ENCODE measurements at regions of chr6 and their contacts with region 1.

Region 1: GRCh38 chr6:7324520-7324919 is 11.5 kb upstream of the SSR1 start:
- DNase-seq: no peak
- ATAC-seq: peak; percentile 55 to 72
- H3K4me3 ChIP-seq: no peak overlapping the region
- H3K27ac ChIP-seq: no peak overlapping the region
- H3K4me1 ChIP-seq: no peaks in the 10 kb centered on the region
- H3K27me3 ChIP-seq: no peaks in the 10 kb centered on the region

Region 2: DNA sequence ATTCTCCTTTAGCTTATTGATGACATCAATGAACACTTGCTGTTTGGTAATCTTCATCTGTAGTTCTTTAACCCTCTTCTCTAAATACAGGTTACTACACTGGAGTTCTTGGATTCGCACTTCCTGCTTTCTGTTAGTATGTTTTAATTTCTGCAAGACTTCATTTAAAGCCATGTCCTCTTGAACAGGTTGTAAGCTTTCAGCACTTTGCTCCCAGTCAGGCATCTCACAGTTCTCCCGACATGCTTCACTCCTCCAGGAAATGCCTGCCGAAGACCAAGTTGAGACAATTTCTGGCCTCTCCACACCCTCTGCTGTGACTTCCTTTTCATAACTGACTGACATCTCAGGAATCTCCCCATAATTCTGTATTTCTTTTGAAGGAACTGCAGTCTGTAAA is 49.2 kb after region 1 on chr6:
- intact Hi-C with region 1: loop called in 1 of 4 experiments (anchors 10 kb)
- DNase-seq: no peak
- ATAC-seq: no peak
- H3K4me3 ChIP-seq: no peak overlapping the region
- H3K27ac ChIP-seq: no peak overlapping the region
- H3K4me1 ChIP-seq: no peaks in the 10 kb centered on the region
- H3K27me3 ChIP-seq: no peaks in the 10 kb centered on the region